ENCODE measurements at regions of chr3 and their contacts with region 1.

Region 1: DNA sequence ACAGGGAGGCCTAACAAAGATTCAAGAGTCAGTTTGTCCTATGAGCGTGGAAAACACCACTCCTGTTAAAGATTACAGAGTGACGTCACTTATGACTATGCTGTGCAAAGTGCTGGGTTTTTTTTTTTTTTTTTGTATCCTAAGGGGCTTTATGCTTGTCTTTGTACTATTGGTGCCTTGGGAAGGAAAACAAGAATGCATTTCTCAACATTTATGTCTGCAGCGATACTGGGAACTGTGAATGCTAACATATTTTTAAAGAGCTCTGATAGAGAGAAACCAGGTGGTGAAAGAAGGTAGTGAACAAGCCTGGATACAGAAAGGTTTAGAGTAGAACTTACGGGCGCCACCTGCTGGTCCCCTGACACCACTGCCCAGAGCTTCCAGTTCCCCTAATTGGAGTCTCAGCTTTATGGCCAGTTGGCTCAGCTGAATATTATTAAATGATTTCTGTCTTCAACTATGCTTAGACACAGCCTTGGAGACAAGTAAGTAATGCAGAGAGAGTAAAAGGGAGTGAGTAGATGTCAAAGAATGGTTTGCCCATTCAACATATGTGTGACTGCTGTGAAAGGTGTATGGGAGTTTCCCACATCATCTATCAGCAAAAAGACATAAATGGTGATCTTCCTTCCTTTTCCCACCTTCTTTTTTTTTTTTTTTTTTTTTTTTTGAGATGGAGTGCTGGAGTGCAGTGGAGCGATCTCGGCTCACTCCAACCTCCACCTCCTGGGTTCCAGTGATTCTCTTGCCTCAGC is 807.9 kb upstream of the CFAP20DC start:
- DNase-seq: peak; percentile 57 to 87 (median 68)
- ATAC-seq: peak; percentile 95
- H3K4me3 ChIP-seq: no peak overlapping the region
- H3K4me3 Mint-ChIP-seq: peak overlapping the region; percentile 6
- H3K27ac ChIP-seq: no peak overlapping the region
- H3K27ac Mint-ChIP-seq: peak overlapping the region; percentile 17
- H3K4me1 ChIP-seq: peaks cover 2% of the 10 kb centered on the region
- H3K4me1 Mint-ChIP-seq: peaks cover 30% of the 10 kb centered on the region
- H3K27me3 ChIP-seq: no peaks in the 10 kb centered on the region
- H3K27me3 Mint-ChIP-seq: no peaks in the 10 kb centered on the region
- CTCF ChIP-seq: peak; percentile 84

Region 2: DNA sequence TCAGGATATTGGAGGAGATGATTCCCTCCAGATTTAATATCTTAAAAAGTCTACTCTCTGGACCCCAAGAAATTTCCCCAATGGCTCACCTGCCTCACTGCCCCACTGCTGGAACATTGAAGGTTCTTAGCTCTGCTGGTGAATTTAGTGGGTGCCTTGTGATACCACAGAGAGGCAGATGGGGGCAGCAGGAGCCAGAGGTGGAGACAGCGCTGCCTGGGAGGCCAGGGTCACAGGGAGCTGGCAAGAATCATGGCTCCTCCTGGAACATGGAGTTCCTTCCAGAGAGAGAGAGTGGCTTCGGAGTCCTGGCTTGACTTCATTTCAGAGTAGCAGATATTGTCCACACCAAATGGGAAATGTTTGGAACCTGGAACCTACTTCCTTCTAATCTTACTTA is 544.4 kb before region 1 on chr3:
- CTCF ChIA-PET with region 1: no interaction called
- POLR2A ChIA-PET with region 1: no interaction called
- intact Hi-C with region 1: loop called (anchors 5 kb)
- DNase-seq: peak in 8 of 14 experiments; percentile 2 to 51 (median 28)
- ATAC-seq: peak; percentile 62
- H3K4me3 ChIP-seq: no peak overlapping the region
- H3K4me3 Mint-ChIP-seq: no peak overlapping the region
- H3K27ac ChIP-seq: no peak overlapping the region
- H3K27ac Mint-ChIP-seq: no peak overlapping the region
- H3K4me1 ChIP-seq: no peaks in the 10 kb centered on the region
- H3K4me1 Mint-ChIP-seq: peaks cover 11% of the 10 kb centered on the region
- H3K27me3 ChIP-seq: no peaks in the 10 kb centered on the region
- H3K27me3 Mint-ChIP-seq: no peaks in the 10 kb centered on the region
- CTCF ChIP-seq: peak; percentile 46

Measured in CD4-positive, alpha-beta T cell (primary cell).